ENCODE measurements at regions of chr5 and their contacts with region 1.

Region 1: GRCh38 chr5:146541958-146542849 is 26.2 kb upstream of the GPR151 start:
- DNase-seq: peak; percentile 78
- H3K4me3 Mint-ChIP-seq: no peak overlapping the region
- H3K27ac Mint-ChIP-seq: no peak overlapping the region
- H3K4me1 Mint-ChIP-seq: peaks cover 11% of the 10 kb centered on the region
- H3K27me3 Mint-ChIP-seq: peaks cover 20% of the 10 kb centered on the region
- CTCF ChIP-seq: peak; percentile 99

Region 2: DNA sequence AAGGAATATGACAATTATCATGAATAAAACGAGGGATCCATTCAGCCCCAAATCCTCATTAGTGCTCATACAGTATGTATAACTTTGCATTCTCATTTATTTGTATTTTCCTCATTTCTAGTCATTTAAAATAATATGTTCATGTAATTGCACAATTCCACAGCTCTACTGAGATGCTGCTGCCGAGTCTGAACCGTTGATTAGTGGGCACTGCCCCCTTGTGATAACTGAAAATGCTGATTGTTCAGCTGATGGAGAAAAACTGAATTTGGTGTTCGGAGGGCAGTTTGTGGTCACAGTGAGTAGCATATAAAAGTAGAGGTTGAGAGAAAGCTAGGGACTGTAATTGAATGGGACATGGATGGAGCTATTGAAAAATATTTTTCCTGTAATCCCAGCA is 14.0 kb before region 1 on chr5:
- CTCF ChIA-PET with region 1: interaction called, 79 read pairs
- POLR2A ChIA-PET with region 1: no interaction called
- intact Hi-C with region 1: no loop called
- DNase-seq: peak; percentile 36
- H3K4me3 Mint-ChIP-seq: no peak overlapping the region
- H3K27ac Mint-ChIP-seq: no peak overlapping the region
- H3K4me1 Mint-ChIP-seq: peaks cover 16% of the 10 kb centered on the region
- H3K27me3 Mint-ChIP-seq: no peaks in the 10 kb centered on the region
- CTCF ChIP-seq: peak; percentile 9

Region 3: DNA sequence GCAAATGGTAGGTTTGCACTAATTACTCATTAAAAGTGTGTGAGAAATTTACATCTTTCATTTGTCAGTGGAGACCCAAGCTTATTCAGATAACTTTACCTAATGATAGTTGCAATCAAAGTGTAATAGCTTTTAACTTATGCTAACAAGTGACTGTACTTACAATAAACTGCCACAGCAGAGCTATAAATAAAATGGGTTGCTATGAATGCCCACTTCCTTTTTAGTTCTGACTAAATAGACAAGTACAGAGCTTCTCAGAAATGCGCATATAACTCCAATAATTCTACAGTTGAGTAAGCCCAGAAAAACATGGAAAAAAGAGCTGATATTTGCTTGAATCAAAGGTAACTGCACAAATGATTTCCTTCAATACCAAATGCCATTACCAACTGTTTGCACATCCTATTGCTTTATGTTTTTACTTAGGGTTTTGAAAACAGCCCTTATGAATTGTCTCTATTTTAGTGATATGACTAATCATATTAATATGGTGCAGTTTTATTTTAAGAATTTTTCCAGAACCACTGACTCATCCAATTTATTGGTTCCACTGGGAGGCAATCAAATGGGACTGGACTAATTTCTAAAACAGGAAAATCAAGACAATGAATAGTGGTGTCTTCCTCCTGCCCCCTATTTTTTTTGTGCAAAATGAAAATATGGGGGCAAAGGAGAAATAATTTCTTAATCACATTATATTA is 252.3 kb after region 1 on chr5:
- CTCF ChIA-PET with region 1: no interaction called
- POLR2A ChIA-PET with region 1: no interaction called
- intact Hi-C with region 1: no loop called
- DNase-seq: no peak
- H3K4me3 Mint-ChIP-seq: no peak overlapping the region
- H3K27ac Mint-ChIP-seq: no peak overlapping the region
- H3K4me1 Mint-ChIP-seq: no peaks in the 10 kb centered on the region
- H3K27me3 Mint-ChIP-seq: peaks cover 28% of the 10 kb centered on the region
- CTCF ChIP-seq: no peak

Region 4: DNA sequence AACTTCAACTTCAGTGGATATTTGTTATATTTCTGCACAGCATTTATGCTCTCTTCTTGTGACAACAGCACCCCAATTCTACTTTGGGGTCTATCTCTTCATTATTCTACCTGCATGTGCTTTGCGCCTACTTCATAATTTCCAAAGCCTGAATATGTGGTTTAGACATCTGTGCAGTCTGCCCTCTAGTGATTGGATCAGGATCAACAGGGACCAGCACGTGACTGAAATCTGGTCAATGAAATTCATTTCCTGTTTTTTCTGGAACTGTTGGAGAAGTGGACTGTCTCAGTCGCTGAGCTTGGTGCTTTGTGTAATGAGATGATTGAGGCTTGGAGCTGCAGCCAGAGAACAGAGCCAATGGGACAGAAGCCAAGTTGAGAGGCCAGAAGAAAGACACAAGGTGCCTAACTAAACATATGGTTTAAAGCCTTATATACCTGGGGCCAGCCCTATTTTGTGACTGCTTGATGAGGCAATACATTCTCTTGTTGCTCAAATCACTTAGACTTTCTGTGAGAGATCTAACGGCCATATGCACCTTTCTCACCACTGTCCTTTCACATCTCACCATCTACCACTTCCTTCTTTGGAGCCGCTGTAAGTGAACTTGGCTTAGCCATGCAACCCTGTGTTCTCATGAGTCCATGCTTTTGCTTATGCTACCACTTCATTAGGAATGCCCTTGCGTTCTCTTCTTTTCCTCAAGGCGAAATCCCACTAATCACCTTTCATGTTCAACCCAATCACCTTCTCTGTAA is 405.2 kb after region 1 on chr5:
- CTCF ChIA-PET with region 1: interaction called, 23 read pairs
- POLR2A ChIA-PET with region 1: no interaction called
- intact Hi-C with region 1: loop called (anchors 5 kb)
- DNase-seq: peak; percentile 44
- H3K4me3 Mint-ChIP-seq: no peak overlapping the region
- H3K27ac Mint-ChIP-seq: no peak overlapping the region
- H3K4me1 Mint-ChIP-seq: no peaks in the 10 kb centered on the region
- H3K27me3 Mint-ChIP-seq: no peaks in the 10 kb centered on the region
- CTCF ChIP-seq: peak; percentile 23

Region 5: DNA sequence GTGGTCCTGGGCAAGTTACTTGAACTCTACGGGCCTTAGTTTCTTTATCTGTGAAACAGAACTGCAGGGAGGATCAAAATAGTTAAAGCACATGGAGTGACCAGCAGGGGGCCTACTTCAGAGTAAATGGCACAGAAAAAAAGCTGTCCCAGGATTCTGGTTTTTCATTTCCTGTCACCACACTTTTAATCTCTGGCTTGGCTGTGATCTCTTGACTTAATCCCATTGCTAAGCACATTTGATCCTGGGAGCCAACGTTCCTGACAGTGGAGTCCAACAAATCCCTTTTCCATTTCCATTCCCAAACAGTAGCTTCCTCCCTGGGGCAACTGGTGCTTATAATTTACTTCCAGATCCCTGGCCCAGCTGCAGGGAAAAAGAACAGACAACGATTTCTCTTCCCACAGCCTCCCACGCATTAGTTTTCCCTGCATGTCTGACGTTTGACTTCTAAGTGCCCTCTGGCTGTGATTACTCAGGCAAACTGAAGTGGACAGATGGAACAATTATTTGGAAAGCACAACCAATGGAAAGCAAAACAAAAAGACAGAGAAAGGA is 556.1 kb after region 1 on chr5:
- CTCF ChIA-PET with region 1: interaction called, 12 read pairs
- POLR2A ChIA-PET with region 1: no interaction called
- intact Hi-C with region 1: no loop called
- DNase-seq: peak; percentile 69
- H3K4me3 Mint-ChIP-seq: no peak overlapping the region
- H3K27ac Mint-ChIP-seq: peak overlapping the region; percentile 7
- H3K4me1 Mint-ChIP-seq: peaks cover 13% of the 10 kb centered on the region
- H3K27me3 Mint-ChIP-seq: no peaks in the 10 kb centered on the region
- CTCF ChIP-seq: peak; percentile 61

Region 6: DNA sequence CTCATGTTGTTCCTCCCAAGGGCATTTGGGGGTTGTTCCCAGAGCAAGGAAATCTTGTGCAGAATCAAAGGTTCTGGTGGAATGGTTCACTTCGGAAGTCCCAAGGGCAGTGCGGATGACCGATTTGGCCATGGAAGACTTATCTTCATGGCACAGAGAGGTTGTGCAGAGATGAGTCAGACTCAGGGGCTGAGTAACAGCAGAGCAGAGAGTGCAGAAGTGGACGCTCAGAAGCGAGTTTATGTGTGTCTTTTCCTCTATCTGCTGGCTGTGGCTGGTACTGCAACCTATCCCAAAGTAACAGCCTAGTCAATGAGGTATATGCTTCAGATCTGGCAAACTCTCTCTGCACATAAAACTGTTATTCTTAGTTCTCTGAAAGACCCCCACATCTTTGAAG is 849.6 kb after region 1 on chr5:
- CTCF ChIA-PET with region 1: interaction called, 5 read pairs
- POLR2A ChIA-PET with region 1: no interaction called
- intact Hi-C with region 1: loop called (anchors 5 kb)
- DNase-seq: peak; percentile 89
- H3K4me3 Mint-ChIP-seq: no peak overlapping the region
- H3K27ac Mint-ChIP-seq: no peak overlapping the region
- H3K4me1 Mint-ChIP-seq: no peaks in the 10 kb centered on the region
- H3K27me3 Mint-ChIP-seq: no peaks in the 10 kb centered on the region
- CTCF ChIP-seq: peak; percentile 87